ENCODE measurements at regions of chr1 and their contacts with region 1.

Region 1: GRCh38 chr1:115609021-115609420 is 32.7 kb upstream of the VANGL1 start:
- DNase-seq: no peak
- H3K4me3 ChIP-seq: no peak overlapping the region
- H3K27ac ChIP-seq: no peak overlapping the region
- H3K4me1 ChIP-seq: no peaks in the 10 kb centered on the region
- H3K27me3 ChIP-seq: no peaks in the 10 kb centered on the region
- CTCF ChIP-seq: no peak

Region 2: DNA sequence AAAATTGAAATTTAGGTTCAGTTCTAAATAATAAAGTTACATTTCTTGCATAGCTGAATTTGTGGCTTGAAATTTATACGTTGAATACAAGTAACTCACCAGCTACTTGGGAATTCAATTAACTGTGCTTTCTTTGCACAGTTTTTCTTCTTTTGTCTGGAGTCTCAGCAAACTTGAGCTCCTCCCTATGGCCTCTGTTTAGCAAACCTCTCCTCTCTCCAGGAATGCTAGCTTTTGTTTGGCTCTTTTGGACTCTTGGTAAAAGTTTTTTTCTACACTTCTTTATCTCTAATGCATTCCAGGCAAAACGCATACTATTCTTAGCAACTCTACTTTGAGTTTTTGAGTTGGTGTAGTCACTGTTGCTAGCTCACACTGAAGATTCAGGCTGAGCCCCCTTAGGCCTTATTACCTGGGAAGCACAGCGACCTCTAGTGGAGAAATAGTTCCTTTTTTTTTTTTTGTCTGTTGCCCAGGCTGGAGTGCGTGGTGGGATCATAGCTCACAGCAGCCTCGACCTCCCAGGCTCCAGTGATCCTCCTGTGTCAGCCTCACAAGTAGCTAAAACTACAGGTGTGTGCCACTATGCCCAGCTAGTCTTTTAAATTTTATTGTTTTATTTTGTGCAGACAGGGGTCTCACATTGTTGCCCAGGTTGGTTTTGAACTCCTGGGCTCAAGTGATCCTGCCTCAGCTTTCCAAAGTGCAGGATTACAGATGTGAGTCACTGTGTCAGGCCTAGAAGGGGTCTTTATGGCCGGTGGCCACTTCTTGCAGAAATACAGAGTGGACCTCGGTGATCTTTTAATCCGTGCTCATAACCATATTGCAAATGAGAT is 97.8 kb after region 1 on chr1:
- CTCF ChIA-PET with region 1: interaction called, 29 read pairs
- POLR2A ChIA-PET with region 1: no interaction called
- intact Hi-C with region 1: loop called (anchors 1 kb)
- DNase-seq: peak; percentile 84
- H3K4me3 ChIP-seq: no peak overlapping the region
- H3K27ac ChIP-seq: no peak overlapping the region
- H3K4me1 ChIP-seq: peaks cover 23% of the 10 kb centered on the region
- H3K27me3 ChIP-seq: no peaks in the 10 kb centered on the region
- CTCF ChIP-seq: peak; percentile 89

Region 3: GRCh38 chr1:115764541-115764940 is 155.5 kb after region 1 on chr1:
- CTCF ChIA-PET with region 1: interaction called, 16 read pairs
- POLR2A ChIA-PET with region 1: no interaction called
- intact Hi-C with region 1: loop called (anchors 2 kb)
- DNase-seq: peak; percentile 36
- H3K4me3 ChIP-seq: no peak overlapping the region
- H3K27ac ChIP-seq: no peak overlapping the region
- H3K4me1 ChIP-seq: no peaks in the 10 kb centered on the region
- H3K27me3 ChIP-seq: no peaks in the 10 kb centered on the region
- CTCF ChIP-seq: peak; percentile 39

Region 4: DNA sequence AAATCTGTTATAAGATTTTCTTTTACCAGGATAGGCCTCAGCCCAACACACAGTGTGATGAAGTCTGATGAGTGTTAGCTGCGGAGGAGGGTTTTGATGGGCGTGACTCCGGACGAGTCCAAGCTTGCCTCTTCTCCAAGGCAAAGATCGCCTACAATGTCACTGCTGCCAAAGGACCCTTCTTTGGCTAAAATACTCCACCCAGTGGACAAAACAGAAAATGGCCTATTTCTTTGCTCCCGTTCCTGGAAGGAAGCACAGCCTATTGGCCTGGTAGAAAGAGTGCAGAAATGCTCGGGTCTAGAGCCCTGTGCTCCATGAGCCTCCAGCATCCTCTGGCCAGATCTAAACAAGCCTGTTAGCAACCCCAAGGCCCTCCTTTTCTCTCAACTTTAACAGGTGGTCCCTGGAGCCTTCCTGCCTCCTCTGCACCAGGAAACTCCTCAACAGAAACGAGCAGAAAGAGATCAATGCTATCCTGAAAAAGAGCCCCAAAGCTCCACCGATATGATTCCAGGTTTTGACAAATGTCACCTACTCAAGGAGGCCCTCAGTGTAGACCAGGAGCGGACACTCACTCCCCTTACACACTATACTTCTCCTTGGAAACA is 162.9 kb after region 1 on chr1:
- CTCF ChIA-PET with region 1: interaction called, 17 read pairs
- POLR2A ChIA-PET with region 1: no interaction called
- intact Hi-C with region 1: no loop called
- DNase-seq: peak; percentile 85
- H3K4me3 ChIP-seq: no peak overlapping the region
- H3K27ac ChIP-seq: no peak overlapping the region
- H3K4me1 ChIP-seq: no peaks in the 10 kb centered on the region
- H3K27me3 ChIP-seq: peaks cover 4% of the 10 kb centered on the region
- CTCF ChIP-seq: peak; percentile 77

Region 5: GRCh38 chr1:115797486-115797885 is 188.5 kb after region 1 on chr1:
- CTCF ChIA-PET with region 1: no interaction called
- POLR2A ChIA-PET with region 1: no interaction called
- intact Hi-C with region 1: no loop called
- DNase-seq: peak; percentile 15
- H3K4me3 ChIP-seq: no peak overlapping the region
- H3K27ac ChIP-seq: no peak overlapping the region
- H3K4me1 ChIP-seq: no peaks in the 10 kb centered on the region
- H3K27me3 ChIP-seq: no peaks in the 10 kb centered on the region
- CTCF ChIP-seq: no peak

Region 6: GRCh38 chr1:115980998-115981993 is 372.3 kb after region 1 on chr1:
- CTCF ChIA-PET with region 1: no interaction called
- POLR2A ChIA-PET with region 1: no interaction called
- intact Hi-C with region 1: loop called (anchors 5 kb)
- DNase-seq: peak; percentile 70
- H3K4me3 ChIP-seq: no peak overlapping the region
- H3K27ac ChIP-seq: no peak overlapping the region
- H3K4me1 ChIP-seq: no peaks in the 10 kb centered on the region
- H3K27me3 ChIP-seq: no peaks in the 10 kb centered on the region
- CTCF ChIP-seq: peak; percentile 82

Region 7: DNA sequence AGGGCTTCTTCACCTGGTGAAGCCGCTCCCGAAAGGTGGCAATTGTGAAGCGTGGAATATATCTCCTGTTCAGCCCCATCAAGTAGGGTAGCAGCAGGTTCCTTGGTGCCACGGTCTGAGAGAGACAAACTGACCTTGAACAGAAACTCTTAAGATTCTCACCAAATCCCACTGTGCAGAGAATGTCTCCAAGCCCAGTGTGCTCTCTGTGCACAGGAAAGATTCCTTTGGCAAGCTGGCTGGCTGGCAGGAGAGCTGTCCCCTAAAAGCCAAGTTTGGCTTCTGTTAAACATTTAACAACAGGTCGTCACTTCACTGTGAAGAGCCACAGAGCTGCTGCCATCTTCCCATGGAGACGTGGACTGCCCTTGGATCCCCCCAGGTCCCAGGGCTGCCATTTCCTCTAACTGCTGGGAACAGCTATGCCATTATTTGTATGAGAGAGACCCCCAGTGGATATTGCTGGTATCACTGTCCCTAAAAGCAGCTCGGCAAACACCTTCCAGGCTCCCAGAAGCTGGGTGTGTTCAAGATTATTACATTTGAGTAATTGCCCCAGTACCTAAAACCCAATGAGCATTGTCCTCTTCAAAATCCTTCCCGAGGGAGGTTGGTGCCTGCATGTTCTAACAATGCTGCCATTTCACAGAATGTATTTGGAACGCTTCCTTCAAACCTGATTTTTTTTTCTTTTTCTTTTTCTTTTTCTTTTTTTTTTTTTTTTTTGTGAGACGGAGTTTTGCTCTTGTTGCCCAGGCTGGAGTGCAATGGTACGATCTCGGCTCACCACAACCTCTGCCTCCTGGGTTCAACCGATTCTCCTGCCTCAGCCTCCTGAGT is 890.0 kb after region 1 on chr1:
- CTCF ChIA-PET with region 1: interaction called, 3 read pairs
- POLR2A ChIA-PET with region 1: no interaction called
- intact Hi-C with region 1: loop called (anchors 5 kb)
- DNase-seq: peak; percentile 91
- H3K4me3 ChIP-seq: no peak overlapping the region
- H3K27ac ChIP-seq: peak overlapping the region; percentile 75
- H3K4me1 ChIP-seq: peaks cover 38% of the 10 kb centered on the region
- H3K27me3 ChIP-seq: no peaks in the 10 kb centered on the region
- CTCF ChIP-seq: peak; percentile 89

Measured in A673 (cell line).